IMR-90 (cell line): ENCODE measurements at regions of chr14 and their contacts with region 1.

Region 1: DNA sequence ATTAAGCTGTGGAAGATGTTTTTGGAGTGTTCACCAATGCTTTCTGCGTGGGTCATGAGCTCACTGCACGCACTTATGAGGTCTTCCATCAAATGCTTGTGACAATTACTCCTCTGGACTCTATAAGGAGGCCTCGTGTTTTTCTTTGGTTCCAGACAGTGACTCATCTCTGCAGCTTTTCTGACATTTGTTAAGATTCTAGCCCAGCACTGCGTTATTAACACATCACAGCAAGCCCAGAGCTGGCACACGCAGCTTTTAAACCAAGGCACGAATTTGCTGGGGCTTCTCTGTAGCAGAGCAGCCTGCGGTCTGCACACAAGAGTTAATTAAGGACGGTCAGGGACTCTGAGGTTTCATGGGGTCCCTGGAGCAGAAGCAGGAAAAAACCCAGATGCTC is 16.9 kb downstream of the MEG3 start:
- DNase-seq: peak; percentile 95
- ATAC-seq: peak; percentile 77
- H3K4me3 ChIP-seq: no peak overlapping the region
- H3K27ac ChIP-seq: peak overlapping the region; percentile 72; the same call in 1 of the 2 replicates
- H3K4me1 ChIP-seq: peaks cover 21% of the 10 kb centered on the region
- H3K27me3 ChIP-seq: no peaks in the 10 kb centered on the region
- CTCF ChIP-seq: no peak
- POLR2A ChIP-seq: no peak
- RAD21 ChIP-seq: peak; percentile 10; the same call in 1 of the 2 replicates

Region 2: DNA sequence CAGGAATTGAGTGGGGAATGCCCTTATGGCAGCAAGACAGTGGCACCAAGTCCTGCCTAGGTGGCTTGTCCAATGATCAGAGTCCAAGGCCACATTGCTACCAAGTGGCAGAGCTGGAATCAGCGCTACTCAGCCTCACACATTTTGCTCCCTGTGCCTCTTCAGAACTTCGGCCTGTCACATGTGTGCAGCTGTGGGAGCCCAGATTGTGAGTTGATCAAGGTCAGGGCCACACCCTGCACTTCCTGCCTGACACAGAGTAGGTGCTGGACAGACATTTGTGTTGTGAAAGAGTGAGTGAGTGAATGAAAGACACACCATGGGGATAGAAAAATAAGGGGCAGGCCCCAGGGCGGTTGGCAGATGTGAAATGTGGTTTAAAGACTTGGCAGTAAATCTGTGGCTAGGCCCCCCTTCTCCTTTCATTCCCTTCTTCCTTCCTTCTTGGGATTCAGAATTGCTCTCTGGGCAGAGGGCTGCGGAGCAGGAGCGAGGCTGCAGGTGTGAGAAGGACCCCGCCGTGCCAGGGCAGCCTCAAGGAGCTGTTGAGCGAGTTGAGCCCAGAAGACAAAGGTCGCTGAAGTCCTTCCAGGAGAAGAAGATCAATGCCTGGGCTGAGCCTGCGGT is 436.2 kb before region 1 on chr14:
- CTCF ChIA-PET with region 1: no interaction called
- POLR2A ChIA-PET with region 1: no interaction called
- dilution Hi-C with region 1: no loop called
- in situ Hi-C with region 1: loop called (anchors 10 kb)
- intact Hi-C with region 1: no loop called
- DNase-seq: peak; percentile 32
- ATAC-seq: no peak
- H3K4me3 ChIP-seq: no peak overlapping the region
- H3K27ac ChIP-seq: no peak overlapping the region
- H3K4me1 ChIP-seq: peaks cover 10% of the 10 kb centered on the region
- H3K27me3 ChIP-seq: no peaks in the 10 kb centered on the region
- CTCF ChIP-seq: no peak
- POLR2A ChIP-seq: no peak
- RAD21 ChIP-seq: no peak

Region 3: GRCh38 chr14:100662879-100663760 is 179.7 kb before region 1 on chr14:
- CTCF ChIA-PET with region 1: no interaction called
- POLR2A ChIA-PET with region 1: no interaction called
- dilution Hi-C with region 1: no loop called
- in situ Hi-C with region 1: no loop called
- intact Hi-C with region 1: loop called (anchors 5 kb)
- DNase-seq: peak; percentile 61
- ATAC-seq: no peak; the same call in 1 of the 2 replicates
- H3K4me3 ChIP-seq: no peak overlapping the region
- H3K27ac ChIP-seq: no peak overlapping the region
- H3K4me1 ChIP-seq: peaks cover 12% of the 10 kb centered on the region
- H3K27me3 ChIP-seq: peaks cover 21% of the 10 kb centered on the region
- CTCF ChIP-seq: peak; percentile 82
- POLR2A ChIP-seq: no peak
- RAD21 ChIP-seq: peak; percentile 79

Region 4: GRCh38 chr14:101004954-101005353 is 162.2 kb after region 1 on chr14:
- CTCF ChIA-PET with region 1: no interaction called
- POLR2A ChIA-PET with region 1: no interaction called
- dilution Hi-C with region 1: no loop called
- in situ Hi-C with region 1: no loop called
- intact Hi-C with region 1: no loop called
- DNase-seq: peak; percentile 87
- ATAC-seq: peak; percentile 13
- H3K4me3 ChIP-seq: no peak overlapping the region
- H3K27ac ChIP-seq: peak overlapping the region; percentile 82
- H3K4me1 ChIP-seq: peaks cover 29% of the 10 kb centered on the region
- H3K27me3 ChIP-seq: no peaks in the 10 kb centered on the region
- CTCF ChIP-seq: no peak
- POLR2A ChIP-seq: no peak
- RAD21 ChIP-seq: no peak

Region 5: DNA sequence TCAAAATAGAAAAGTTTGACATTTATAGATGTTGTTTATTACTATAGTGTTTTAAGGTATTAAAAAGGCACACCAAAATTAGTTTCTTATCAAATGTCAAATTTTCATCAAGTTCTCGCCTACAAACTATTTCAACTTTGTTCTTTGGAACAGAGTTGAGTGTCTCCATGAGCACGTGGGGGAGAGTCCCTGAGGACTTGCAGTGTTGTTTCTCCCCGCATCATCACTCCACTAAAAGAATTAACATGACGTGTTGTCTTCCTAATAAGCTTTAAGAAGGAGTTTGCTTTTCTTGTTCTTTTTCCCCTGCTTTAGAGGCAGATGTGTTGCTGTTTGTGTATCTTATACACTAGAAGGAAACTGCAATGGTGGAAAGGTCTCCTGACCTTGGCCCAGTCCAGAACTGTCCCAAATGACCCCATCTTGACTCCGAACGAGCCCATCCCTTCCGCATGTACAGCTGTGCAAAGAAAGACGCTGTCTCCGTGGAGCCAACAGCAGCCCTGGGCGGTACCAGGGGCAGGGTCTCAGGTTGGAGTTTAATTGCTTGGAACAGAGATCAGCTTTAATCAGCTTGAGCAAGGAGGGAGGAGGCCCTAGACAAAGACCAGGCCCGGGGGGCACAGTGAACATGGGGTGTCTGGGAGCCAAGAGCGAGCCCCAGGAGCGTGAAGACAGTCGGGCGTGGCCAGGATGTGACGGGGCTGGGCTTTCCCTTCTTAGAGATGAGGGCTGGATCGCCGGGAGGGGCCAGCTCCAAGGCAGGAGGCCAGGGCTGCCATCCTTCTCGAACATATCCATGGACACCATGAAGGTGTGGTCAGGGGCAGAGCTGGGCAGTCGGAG is 276.2 kb after region 1 on chr14:
- CTCF ChIA-PET with region 1: no interaction called
- POLR2A ChIA-PET with region 1: no interaction called
- dilution Hi-C with region 1: no loop called
- in situ Hi-C with region 1: no loop called
- intact Hi-C with region 1: no loop called
- DNase-seq: no peak
- ATAC-seq: no peak
- H3K4me3 ChIP-seq: no peak overlapping the region
- H3K27ac ChIP-seq: no peak overlapping the region
- H3K4me1 ChIP-seq: no peaks in the 10 kb centered on the region
- H3K27me3 ChIP-seq: peaks cover 18% of the 10 kb centered on the region; the same call in 1 of the 2 replicates
- CTCF ChIP-seq: no peak
- POLR2A ChIP-seq: no peak
- RAD21 ChIP-seq: no peak